Endothelial cell of umbilical vein (primary cell): ENCODE measurements at regions of chr1 and their contacts with region 1.

Region 1: GRCh38 chr1:161486806-161487741 is 18.2 kb upstream of the FCGR2A start:
- DNase-seq: peak; percentile 58
- H3K4me3 ChIP-seq: no peak overlapping the region
- H3K27ac ChIP-seq: no peak overlapping the region
- H3K4me1 ChIP-seq: peaks cover 2% of the 10 kb centered on the region
- H3K27me3 ChIP-seq: peaks cover 16 to 27% of the 10 kb centered on the region in 2 experiments
- CTCF ChIP-seq: peak; percentile 64 to 68
- POLR2A ChIP-seq: no peak

Region 2: DNA sequence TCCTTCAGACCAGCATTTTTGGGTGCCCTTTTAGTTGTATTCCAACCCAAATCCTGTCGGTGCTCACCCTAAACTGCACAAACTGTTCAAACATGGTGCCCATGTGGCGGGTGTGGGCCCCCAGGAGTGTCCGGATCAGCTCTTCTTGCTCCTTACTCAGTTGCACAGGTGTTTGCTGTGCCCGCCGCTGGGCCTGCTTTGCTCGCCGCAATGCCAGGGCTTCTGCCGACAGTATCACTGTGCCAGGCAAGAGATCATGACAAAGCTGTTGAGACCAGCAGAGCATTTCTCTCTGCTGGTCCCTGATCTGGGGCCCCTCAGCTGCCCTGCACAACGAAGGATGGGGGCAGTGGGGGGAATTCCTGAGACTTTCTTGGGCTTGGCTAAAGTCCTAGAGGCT is 254.0 kb before region 1 on chr1:
- CTCF ChIA-PET with region 1: no interaction called
- POLR2A ChIA-PET with region 1: no interaction called
- dilution Hi-C with region 1: no loop called
- intact Hi-C with region 1: no loop called
- DNase-seq: no peak
- H3K4me3 ChIP-seq: no peak overlapping the region
- H3K27ac ChIP-seq: no peak overlapping the region
- H3K4me1 ChIP-seq: peaks cover under 1% of the 10 kb centered on the region
- H3K27me3 ChIP-seq: peaks cover 1 to 3% of the 10 kb centered on the region in 2 experiments
- CTCF ChIP-seq: no peak
- POLR2A ChIP-seq: no peak

Region 3: DNA sequence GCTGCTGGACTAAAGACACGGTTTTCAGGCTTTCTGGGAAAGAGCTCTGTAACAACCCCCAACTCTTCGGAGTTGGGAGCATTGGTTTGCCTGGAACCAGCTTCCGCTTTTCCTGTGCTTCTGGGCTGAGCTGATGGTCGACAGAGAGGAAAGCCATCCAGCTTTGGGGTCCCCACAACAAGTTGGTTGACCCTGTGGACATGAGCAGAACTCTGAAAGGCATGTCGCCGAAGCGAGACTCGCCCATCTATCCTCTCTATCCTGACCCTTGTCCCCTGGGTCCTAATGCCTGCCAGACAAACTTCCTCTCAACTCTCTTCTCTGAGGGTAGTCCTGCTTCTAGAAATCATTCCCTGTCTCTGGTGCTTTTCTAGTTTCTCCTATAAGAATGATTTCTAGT is 13.7 kb before region 1 on chr1:
- CTCF ChIA-PET with region 1: interaction called, 10 read pairs
- POLR2A ChIA-PET with region 1: no interaction called
- dilution Hi-C with region 1: no loop called
- intact Hi-C with region 1: no loop called
- DNase-seq: no peak
- H3K4me3 ChIP-seq: no peak overlapping the region
- H3K27ac ChIP-seq: no peak overlapping the region
- H3K4me1 ChIP-seq: no peaks in the 10 kb centered on the region
- H3K27me3 ChIP-seq: peaks cover 0 to 5% of the 10 kb centered on the region in 2 experiments
- CTCF ChIP-seq: no peak
- POLR2A ChIP-seq: no peak

Region 4: DNA sequence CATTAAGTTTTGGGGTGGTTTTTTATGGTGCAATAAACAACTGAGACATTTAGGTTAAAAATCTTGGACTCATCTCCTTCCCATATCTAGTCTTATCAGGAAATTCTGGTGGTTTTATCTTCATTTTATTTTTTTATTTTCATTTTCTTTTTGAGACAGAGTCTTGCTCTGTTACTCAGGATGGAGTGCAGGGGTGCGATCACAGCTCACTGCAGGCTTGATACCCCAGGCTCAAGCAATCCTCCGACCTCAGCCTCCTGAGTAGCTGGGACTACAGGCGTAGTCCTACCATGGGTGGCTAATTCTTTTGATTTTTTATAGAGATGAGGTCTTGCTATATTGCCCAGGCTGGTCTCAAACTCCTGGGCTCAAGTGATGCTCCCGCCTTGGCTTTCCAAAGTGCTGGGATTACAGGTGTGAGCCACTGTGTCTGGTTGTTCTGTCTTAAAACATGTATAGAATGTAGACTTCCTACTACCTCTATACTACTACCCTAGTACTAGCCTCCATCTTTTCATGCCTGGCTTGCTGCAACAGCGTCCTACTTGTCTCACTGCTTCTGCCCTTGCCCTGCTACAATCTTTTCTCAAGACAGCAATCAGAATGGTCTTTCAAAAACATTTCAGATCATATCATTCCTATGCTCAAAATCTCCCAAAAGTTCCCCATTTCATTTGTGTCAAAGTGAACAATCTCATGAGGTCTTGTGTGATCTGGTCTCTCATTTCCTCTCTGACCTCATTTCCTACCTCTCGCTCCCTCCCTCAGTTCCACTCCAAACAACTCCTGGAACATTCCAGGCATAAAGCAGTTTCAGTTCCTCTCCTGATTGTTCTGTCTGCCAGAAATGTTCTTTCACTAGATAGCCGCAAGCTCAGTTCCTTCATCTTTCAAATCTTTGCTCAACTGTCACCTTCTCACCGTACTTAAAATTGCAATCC is 12.3 kb after region 1 on chr1:
- CTCF ChIA-PET with region 1: interaction called, 23 read pairs
- POLR2A ChIA-PET with region 1: no interaction called
- dilution Hi-C with region 1: no loop called
- intact Hi-C with region 1: no loop called
- DNase-seq: peak; percentile 35
- H3K4me3 ChIP-seq: no peak overlapping the region
- H3K27ac ChIP-seq: peak overlapping the region; percentile 1
- H3K4me1 ChIP-seq: peaks cover 12% of the 10 kb centered on the region
- H3K27me3 ChIP-seq: peaks cover 2 to 4% of the 10 kb centered on the region in 2 experiments
- CTCF ChIP-seq: no peak
- POLR2A ChIP-seq: no peak

Region 5: GRCh38 chr1:161506336-161507223 is 19.5 kb after region 1 on chr1:
- CTCF ChIA-PET with region 1: interaction called, 6 read pairs
- POLR2A ChIA-PET with region 1: no interaction called
- dilution Hi-C with region 1: no loop called
- intact Hi-C with region 1: loop called (anchors 2 kb)
- DNase-seq: peak; percentile 32
- H3K4me3 ChIP-seq: no peak overlapping the region
- H3K27ac ChIP-seq: no peak overlapping the region
- H3K4me1 ChIP-seq: peaks cover 5% of the 10 kb centered on the region
- H3K27me3 ChIP-seq: no peaks in the 10 kb centered on the region
- CTCF ChIP-seq: no peak
- POLR2A ChIP-seq: no peak

Region 6: GRCh38 chr1:161531986-161532643 is 45.0 kb after region 1 on chr1:
- CTCF ChIA-PET with region 1: interaction called, 7 read pairs
- POLR2A ChIA-PET with region 1: no interaction called
- dilution Hi-C with region 1: no loop called
- intact Hi-C with region 1: loop called (anchors 2 kb)
- DNase-seq: no peak
- H3K4me3 ChIP-seq: no peak overlapping the region
- H3K27ac ChIP-seq: no peak overlapping the region
- H3K4me1 ChIP-seq: peaks cover 12% of the 10 kb centered on the region
- H3K27me3 ChIP-seq: no peaks in the 10 kb centered on the region
- CTCF ChIP-seq: no peak
- POLR2A ChIP-seq: no peak

Region 7: DNA sequence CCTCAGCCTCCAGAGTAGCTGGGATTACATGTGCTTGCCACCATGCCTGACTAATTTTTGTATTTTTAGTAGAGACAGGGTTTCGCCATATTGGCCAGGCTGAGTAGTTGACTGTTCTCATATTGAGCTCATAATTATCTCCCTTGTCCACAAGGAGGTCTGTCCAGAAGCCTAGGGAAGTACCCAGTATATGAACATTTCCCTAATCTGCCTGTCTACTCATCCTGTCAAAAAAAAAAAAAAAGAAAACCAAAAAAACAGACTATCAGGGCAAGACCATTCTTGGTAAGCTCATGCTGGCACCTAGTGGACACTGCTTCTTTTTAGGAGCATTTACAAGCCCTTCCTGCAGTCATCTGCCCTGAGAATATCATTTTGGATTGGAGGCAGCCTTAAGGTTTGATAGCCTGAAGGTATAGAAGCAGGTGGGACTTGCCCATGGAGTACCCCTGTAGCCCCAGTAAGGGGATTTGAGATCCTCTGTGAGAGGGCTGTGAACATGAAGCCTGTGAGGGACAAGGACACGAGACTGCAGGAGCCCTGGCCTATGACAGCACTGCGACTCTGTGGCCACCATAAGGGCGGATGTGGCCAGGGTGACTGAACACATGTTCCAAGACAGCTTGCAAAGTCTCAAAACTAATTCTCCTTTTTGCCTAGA is 251.7 kb after region 1 on chr1:
- CTCF ChIA-PET with region 1: interaction called, 102 read pairs
- POLR2A ChIA-PET with region 1: no interaction called
- dilution Hi-C with region 1: no loop called
- intact Hi-C with region 1: loop called (anchors 1 kb)
- DNase-seq: peak; percentile 44
- H3K4me3 ChIP-seq: no peak overlapping the region
- H3K27ac ChIP-seq: no peak overlapping the region
- H3K4me1 ChIP-seq: peaks cover 3% of the 10 kb centered on the region
- H3K27me3 ChIP-seq: no peaks in the 10 kb centered on the region
- CTCF ChIP-seq: peak; percentile 39 to 43
- POLR2A ChIP-seq: no peak